ENCODE measurements at regions of chr4 and their contacts with region 1.

Region 1: GRCh38 chr4:67573193-67573592 is 14.7 kb downstream of the STAP1 start:
- DNase-seq: no peak
- H3K4me3 Mint-ChIP-seq: no peak overlapping the region
- H3K27ac Mint-ChIP-seq: peak overlapping the region; percentile 27
- H3K4me1 Mint-ChIP-seq: peaks cover 51% of the 10 kb centered on the region
- H3K27me3 Mint-ChIP-seq: no peaks in the 10 kb centered on the region

Region 2: DNA sequence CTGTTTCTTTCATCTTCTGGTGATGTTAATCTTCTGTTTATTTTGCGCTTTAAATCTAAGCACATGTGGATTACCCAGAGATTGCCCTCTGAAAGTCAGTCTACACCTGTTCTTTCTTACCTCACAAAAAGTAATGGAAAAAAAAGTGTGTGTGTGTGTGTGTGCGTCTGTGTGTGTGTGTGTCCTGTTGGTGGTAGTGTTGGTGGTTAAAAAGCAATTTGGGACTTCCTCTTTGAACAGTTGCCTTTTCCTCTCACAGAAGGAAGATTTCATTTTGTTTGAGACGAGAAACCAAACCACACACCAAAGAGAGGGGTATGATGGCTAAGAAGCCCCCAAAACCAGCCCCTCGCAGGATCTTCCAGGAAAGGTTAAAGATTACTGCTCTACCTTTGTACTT is 14.7 kb before region 1 on chr4 and contains the start of gene STAP1:
- CTCF ChIA-PET with region 1: interaction called, 4 read pairs
- intact Hi-C with region 1: loop called (anchors 1 kb)
- DNase-seq: peak; percentile 65
- H3K4me3 Mint-ChIP-seq: peak within 1 kb of the TSS; percentile 86
- H3K27ac Mint-ChIP-seq: peak within 1 kb of the TSS; percentile 93
- H3K4me1 Mint-ChIP-seq: peaks cover 49% of the 10 kb centered on the region
- H3K27me3 Mint-ChIP-seq: no peaks in the 10 kb centered on the region
- total RNA-seq, gene STAP1: 18.9 to 22.1 TPM

Measured in activated naive CD4-positive, alpha-beta T cell treated with anti-CD3 and anti-CD28 coated beads for 36 hours (primary cell).